AG04450 (cell line): ENCODE measurements at regions of chr10 and their contacts with region 1.

Region 1: GRCh38 chr10:4849555-4850242 is 23.7 kb downstream of the AKR1E2 start:
- DNase-seq: peak; percentile 94
- H3K4me3 ChIP-seq: no peak overlapping the region
- H3K27ac ChIP-seq: no peak overlapping the region
- H3K27me3 ChIP-seq: no peaks in the 10 kb centered on the region
- CTCF ChIP-seq: peak; percentile 100

Region 2: DNA sequence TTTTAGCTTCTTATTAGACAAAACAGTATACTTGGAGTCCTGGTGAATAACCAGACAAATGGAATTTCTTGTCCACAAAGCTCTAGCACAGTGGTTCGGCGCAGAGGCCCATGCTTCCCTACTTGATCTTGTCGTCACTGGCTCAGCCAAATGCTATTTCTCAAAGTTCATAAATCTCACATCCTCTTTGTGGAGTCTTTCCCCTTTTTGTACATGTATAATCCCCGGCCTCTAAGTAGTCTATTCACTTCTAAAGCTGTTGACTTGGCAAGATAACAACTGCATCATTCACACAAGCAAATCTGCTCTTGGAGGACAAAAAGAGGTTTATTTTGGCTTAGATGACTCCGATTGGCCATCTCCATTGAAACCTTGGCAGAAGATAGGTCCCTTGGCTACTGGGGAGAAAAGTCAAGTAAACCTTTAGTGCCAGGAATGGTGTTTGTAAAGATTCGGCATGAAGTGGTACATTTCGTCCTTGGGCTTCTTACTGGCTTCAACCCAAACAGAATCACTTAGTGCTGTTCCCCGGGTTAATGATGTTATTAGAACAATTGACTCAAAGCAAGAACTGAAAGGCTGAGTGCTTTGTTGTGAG is 28.8 kb before region 1 on chr10:
- CTCF ChIA-PET with region 1: interaction called, 20 read pairs
- POLR2A ChIA-PET with region 1: no interaction called
- DNase-seq: no peak
- H3K4me3 ChIP-seq: no peak overlapping the region
- H3K27ac ChIP-seq: no peak overlapping the region
- H3K27me3 ChIP-seq: no peaks in the 10 kb centered on the region
- CTCF ChIP-seq: no peak

Region 3: DNA sequence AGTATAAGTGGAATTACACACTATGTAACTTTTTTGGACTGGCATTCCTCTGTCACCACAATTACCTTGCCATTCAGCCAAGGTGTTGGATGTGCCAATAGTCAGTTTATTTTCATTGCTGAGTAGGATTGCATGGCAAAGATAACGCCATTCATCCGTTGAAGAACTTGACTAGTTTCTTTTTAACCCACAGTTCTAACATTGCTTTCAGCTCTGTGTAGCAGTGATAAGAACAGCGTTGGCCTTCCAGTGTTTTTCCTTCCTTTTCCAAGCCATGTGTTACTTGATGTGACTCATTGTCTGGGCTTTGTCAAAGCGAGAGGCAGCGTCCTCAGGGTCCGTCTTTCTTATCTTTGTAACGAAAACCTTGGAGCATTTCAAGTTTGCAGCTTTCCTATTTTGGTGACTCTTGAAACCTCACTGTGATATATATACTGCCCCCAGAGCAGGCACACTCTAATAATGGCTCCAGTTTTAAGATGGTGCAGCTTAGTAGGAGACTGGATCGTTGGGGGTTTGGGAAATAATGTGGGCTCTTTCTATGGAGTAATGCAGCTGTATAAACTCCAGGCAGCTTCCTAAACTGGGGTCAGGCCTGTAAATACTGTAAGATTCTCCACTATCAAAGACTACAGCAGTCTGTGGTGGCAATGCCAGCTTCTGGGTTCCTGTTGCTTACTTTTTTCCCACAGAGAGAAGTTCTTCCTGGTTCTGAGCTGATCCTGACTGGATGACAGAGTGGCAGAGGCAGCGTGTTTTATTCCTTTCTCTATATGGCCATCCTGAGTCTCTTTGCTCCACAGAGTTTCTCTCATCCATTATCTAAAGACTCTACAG is 18.0 kb after region 1 on chr10:
- CTCF ChIA-PET with region 1: interaction called, 23 read pairs
- POLR2A ChIA-PET with region 1: no interaction called
- DNase-seq: no peak
- H3K4me3 ChIP-seq: no peak overlapping the region
- H3K27ac ChIP-seq: no peak overlapping the region
- H3K27me3 ChIP-seq: no peaks in the 10 kb centered on the region
- CTCF ChIP-seq: no peak

Region 4: DNA sequence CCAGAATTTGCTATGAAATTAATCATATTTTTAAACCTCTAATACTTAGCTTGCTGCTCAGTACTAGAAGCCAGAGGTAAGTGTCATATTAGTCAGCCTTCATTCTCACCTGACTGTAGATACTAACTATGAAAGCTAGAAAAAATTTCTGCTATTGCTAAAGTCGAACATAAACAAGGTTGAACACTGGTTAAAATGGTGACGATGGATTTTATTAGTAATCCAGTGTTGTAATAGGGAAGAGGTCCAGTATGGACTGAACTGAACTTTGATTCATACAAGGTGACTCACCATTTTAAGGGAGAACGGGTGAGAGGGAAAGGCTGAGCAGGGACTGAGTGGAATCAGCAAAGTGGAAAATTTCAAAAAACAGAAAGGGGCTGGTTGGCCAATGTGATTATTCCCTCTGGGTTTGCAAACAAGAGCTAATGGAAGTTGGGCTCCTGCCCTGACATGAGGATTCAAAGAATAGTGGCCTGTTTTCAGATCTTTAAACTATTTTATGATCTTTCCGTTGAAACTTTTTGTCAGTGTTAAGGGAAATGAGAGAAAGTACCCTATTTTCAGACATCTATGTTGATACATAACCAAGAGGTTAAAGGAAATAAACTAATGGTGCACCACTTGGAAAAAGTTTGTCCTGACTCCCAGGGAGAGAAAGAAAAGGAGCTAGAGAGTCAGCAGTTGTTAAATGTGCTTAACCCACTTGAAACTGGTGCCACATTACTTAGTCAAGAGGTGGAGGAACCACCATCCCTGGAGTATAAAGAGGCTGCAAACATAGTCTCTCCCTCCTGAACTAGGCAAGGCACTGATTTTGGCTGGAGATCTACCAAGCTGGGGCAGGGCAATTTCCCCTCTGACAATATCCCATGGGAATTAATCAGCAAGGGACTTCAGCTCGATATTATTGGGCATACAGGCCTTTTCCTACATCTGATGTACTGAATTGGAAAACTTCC is 98.2 kb after region 1 on chr10:
- CTCF ChIA-PET with region 1: interaction called, 21 read pairs
- POLR2A ChIA-PET with region 1: interaction called, 3 read pairs
- DNase-seq: peak; percentile 87
- H3K4me3 ChIP-seq: no peak overlapping the region
- H3K27ac ChIP-seq: peak overlapping the region; percentile 81
- H3K27me3 ChIP-seq: no peaks in the 10 kb centered on the region
- CTCF ChIP-seq: no peak

Region 5: DNA sequence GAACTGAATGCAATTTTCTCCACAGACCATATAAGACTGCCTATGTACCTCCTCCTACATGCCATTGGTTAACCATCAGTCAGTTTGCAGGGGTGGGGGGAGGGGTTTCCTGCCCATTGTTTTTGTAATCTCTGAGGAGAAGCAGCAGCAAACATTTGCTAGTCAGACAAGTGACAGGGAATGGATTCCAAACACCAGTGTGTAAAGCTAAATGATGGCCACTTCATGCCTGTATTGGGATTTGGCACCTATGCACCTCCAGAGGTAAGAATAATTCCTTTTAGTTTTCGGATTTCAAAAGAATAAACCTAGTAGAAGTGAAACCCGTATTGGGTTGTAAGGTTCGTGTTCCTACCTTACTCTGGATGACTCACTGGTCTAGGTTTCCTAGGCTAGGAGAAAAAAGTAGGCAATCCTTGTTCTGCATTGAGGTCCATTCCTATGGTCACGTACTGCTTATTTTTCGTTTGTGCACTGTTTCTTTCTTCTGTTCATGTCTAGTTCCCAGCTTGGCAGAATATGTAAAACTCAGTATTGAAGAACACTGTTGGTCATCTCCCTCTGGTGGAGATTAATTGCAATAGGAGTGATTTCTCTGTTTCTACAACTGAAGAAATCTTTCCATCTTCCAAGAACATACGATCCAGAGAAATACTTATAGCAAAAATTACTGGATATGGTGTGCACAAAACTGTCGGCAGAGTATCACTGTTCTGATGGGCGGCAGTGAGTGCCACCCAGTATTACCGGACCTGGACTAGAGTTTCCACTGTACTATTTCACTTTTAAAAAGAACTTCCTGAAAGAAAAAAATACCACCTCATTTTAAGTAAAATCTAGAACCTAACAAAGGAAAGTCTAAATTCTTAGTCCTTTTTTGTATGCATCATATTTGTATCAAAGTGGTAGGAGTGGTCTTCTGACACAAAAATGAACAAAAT is 244.8 kb after region 1 on chr10 and contains the start of gene AKR1C3:
- CTCF ChIA-PET with region 1: interaction called, 239 read pairs
- POLR2A ChIA-PET with region 1: no interaction called
- DNase-seq: peak; percentile 38
- H3K4me3 ChIP-seq: peak within 1 kb of the TSS; percentile 46
- H3K27ac ChIP-seq: no peak within 1 kb of the TSS
- H3K27me3 ChIP-seq: peaks cover 3% of the 10 kb centered on the region
- CTCF ChIP-seq: peak; percentile 70
- polyA plus RNA-seq, gene AKR1C3: 6.4 and 10.7 TPM in 2 replicates

Region 6: GRCh38 chr10:5385224-5385623 is 535.5 kb after region 1 on chr10:
- CTCF ChIA-PET with region 1: interaction called, 33 read pairs
- POLR2A ChIA-PET with region 1: no interaction called
- DNase-seq: no peak
- H3K4me3 ChIP-seq: no peak overlapping the region
- H3K27ac ChIP-seq: no peak overlapping the region
- H3K27me3 ChIP-seq: peaks cover 7% of the 10 kb centered on the region
- CTCF ChIP-seq: no peak